ENCODE measurements at regions of chr11 and their contacts with region 1.

Region 1: GRCh38 chr11:67458266-67458665 is 3.1 kb downstream of the CABP4 start:
- DNase-seq: no peak
- CTCF ChIP-seq: no peak

Region 2: DNA sequence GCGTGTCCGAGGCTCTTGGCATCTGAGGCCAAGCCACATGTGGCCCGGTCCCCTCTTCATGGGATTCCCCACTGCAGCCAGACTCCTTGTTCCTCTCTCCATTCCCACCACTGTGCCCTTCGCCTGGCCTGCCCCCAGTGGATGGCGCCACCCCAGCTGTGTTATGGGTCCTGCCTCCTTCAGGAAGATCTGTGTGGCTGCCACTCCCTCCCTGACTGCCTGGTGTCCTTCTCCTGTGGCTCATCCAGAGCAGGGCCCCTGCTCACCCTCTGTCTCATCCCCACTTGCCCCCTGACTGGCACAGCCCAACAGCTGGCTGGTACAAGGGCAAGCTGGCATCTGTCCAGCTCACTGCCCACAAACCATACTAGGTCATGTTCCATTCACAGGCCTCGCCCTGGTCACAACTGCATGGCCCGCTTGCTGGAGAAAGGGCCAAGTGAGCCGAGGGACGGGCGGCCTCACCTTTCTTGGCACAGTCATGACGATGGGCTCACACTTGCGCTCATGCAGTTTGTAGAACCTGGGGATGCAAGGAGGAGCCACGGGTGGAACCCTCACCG is 18.9 kb before region 1 on chr11:
- CTCF ChIA-PET with region 1: interaction called, 19 read pairs
- POLR2A ChIA-PET with region 1: interaction called, 7 read pairs
- DNase-seq: no peak
- CTCF ChIP-seq: peak; percentile 43

Measured in GM10248 (cell line).